ENCODE measurements at regions of chr7 and their contacts with region 1.

Region 1: DNA sequence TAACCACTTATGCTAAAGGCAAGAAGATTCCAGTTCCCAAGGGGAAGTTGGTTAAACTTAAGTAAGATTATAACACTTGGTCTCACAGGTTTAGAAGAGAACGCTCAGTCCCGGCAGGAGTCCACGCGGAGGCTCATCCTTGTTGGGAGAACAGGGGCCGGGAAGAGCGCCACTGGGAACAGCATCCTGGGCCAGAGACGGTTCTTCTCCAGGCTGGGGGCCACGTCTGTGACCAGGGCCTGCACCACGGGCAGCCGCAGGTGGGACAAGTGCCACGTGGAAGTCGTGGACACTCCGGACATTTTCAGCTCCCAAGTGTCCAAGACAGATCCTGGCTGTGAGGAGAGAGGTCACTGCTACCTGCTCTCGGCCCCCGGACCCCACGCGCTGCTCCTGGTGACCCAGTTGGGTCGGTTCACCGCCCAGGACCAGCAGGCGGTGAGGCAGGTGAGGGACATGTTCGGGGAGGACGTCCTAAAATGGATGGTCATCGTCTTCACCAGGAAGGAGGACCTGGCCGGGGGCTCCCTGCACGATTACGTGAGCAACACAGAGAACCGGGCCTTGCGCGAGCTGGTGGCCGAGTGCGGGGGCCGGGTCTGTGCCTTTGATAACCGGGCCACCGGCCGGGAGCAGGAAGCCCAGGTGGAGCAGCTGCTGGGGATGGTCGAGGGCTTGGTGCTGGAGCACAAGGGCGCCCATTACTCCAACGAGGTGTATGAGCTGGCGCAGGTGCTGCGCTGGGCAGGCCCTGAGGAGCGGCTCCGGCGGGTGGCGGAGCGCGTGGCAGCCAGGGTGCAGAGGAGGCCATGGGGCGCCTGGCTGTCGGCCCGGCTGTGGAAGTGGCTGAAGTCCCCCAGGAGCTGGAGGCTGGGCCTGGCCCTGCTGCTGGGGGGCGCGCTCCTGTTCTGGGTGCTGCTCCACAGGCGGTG is 3.8 kb downstream of the GIMAP1 start:
- DNase-seq: no peak
- ATAC-seq: no peak
- H3K4me3 ChIP-seq: no peak overlapping the region
- H3K27ac ChIP-seq: no peak overlapping the region
- H3K4me1 ChIP-seq: no peaks in the 10 kb centered on the region
- H3K27me3 ChIP-seq: no peaks in the 10 kb centered on the region
- CTCF ChIP-seq: no peak

Region 2: DNA sequence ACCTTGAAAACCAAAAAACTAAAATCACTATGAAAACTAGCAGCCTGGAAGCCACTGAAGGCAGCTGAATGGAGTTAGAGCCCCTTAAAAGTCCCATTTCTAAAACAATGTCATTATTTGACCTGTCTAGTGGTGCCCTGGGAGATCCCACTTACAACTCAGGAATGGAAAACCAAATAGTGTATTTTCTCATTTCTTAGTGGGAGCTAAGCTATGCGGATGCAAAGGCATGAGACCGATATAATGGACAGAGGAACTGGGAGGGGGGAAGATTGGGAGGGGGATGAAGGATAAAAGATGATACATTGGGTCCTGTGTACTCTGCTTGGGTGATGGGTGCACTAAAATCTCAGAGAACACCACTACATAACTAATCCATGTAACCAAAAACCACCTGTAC is 44.5 kb before region 1 on chr7:
- intact Hi-C with region 1: no loop called
- DNase-seq: no peak
- ATAC-seq: no peak
- H3K4me3 ChIP-seq: no peak overlapping the region
- H3K27ac ChIP-seq: no peak overlapping the region
- H3K4me1 ChIP-seq: no peaks in the 10 kb centered on the region
- H3K27me3 ChIP-seq: peaks cover 0 to under 1% (median 0%) of the 10 kb centered on the region in 3 donors
- CTCF ChIP-seq: no peak

Region 3: DNA sequence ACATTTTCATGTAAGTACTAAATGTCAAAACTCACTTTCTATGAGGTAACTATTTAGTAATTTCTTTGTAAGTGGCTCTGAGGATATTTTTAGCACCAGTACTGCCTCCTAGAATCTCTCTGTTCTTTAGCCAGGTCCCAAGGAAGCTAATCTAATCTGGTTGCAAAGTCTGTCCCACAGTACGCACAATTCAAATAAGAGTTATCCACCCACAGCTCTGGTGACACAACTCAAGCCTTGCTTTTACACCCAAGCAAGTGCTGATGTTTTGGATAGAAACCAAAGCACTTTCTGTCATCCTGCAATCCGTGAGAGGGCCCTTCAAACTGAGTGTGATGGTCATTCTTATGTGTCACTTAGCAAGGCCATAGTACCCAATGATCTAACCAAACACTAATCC is 31.5 kb after region 1 on chr7:
- intact Hi-C with region 1: loop called in 1 of 2 experiments (anchors 2 kb)
- DNase-seq: no peak
- ATAC-seq: peak in 1 of 4 donors; percentile 35
- H3K4me3 ChIP-seq: no peak overlapping the region
- H3K27ac ChIP-seq: no peak overlapping the region
- H3K4me1 ChIP-seq: no peaks in the 10 kb centered on the region
- H3K27me3 ChIP-seq: no peaks in the 10 kb centered on the region
- CTCF ChIP-seq: no peak

Measured in psoas muscle (tissue), 8 donors.